Heart left ventricle (tissue), 16 donors: ENCODE measurements at regions of chr2 and their contacts with region 1.

Region 1: GRCh38 chr2:74690571-74690970 is 36.5 kb downstream of the SEMA4F start:
- DNase-seq: no peak
- ATAC-seq: peak in 3 of 4 donors; percentile 73 to 86 (median 80)
- H3K4me3 ChIP-seq: no peak overlapping the region
- H3K27ac ChIP-seq: no peak overlapping the region
- H3K4me1 ChIP-seq: peaks cover 0 to 11% (median 0%) of the 10 kb centered on the region in 12 donors
- H3K27me3 ChIP-seq: peaks cover 0 to 8% (median 0%) of the 10 kb centered on the region in 9 donors
- CTCF ChIP-seq: peak; percentile 46 to 80 (median 63)
- POLR2A ChIP-seq: no peak

Region 2: DNA sequence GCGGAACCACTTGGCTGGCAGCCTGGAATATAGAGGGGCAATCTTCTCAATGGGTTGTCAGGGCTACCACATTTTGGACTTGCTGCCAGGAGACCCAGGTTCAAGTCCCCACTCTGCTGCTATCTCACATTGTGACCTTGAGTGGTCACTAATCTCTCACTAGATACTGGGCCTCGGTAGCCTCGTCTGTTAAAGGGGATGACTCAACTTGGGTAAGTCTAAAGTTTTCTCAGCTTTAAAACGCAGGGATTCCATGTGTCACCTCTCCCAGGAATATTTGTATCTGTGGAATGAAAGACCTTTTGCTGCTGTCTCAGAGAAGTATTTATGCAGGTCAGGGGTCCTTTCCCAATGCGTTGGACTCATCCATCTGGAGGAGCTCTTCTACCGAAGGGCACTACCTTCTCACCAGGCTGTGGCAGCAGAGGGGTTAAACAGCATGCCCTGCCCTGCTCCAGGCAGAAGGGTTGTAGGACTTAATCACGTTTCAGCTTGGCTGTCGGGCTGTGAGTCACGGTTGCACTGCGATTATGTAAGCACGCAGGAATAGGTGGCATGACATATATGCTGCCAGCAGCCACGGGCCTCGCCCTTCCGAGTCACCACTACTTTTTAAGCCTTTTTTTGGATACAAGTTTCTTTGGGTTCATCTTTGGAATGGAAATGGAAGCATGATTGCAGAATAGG is 50.0 kb after region 1 on chr2:
- intact Hi-C with region 1: no loop called
- DNase-seq: peak in 4 of 5 donors; percentile 24 to 68 (median 40)
- ATAC-seq: peak in 3 of 4 donors; percentile 86 to 97 (median 91)
- H3K4me3 ChIP-seq: no peak overlapping the region
- H3K27ac ChIP-seq: peak overlapping the region in 1 of 12 donors; percentile 3
- H3K4me1 ChIP-seq: peaks cover 0 to 11% (median 2%) of the 10 kb centered on the region in 12 donors
- H3K27me3 ChIP-seq: no peaks in the 10 kb centered on the region
- CTCF ChIP-seq: no peak
- POLR2A ChIP-seq: no peak

Region 3: DNA sequence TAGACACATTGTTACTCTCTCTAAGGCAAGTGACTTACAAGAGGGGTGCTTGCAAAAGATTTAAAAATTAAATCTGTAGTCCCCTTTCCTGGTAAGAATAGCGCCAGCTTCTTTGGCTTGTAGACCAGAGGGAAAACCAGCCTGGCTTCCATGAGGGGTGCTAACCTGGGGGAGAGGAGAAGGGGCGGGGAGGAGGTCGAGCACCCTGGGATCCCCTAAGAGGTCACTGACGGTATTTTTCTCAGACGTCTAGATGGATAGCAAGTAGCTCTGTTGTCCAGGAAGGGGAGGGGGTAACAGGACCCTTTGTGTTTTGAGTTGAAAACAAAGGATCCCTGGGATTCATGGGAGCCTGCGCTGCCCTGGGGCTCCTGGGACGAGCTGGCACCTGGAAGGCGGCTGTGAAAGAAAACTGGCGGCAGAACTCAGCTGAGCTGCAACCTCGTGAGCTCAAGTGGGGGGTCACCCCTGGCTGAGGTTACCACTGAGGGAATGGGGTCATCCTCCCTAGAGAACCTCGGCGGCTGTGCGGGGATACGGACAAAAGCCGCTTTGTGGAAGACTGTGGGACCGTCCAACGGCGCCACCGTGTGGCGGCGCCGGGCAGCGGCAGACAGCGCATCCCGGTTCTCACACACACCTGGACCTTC is 918.2 kb after region 1 on chr2:
- intact Hi-C with region 1: loop called in 4 of 10 experiments (anchors 5 to 10 kb)
- DNase-seq: peak; percentile 37 to 69 (median 49)
- ATAC-seq: peak; percentile 74 to 91 (median 79)
- H3K4me3 ChIP-seq: peak overlapping the region in 7 of 12 donors; percentile 3 to 32 (median 19)
- H3K27ac ChIP-seq: no peak overlapping the region
- H3K4me1 ChIP-seq: peaks cover 0 to 5% (median 2%) of the 10 kb centered on the region in 12 donors
- H3K27me3 ChIP-seq: peaks cover 0 to 42% (median 18%) of the 10 kb centered on the region in 9 donors
- CTCF ChIP-seq: peak; percentile 83 to 97 (median 91)
- POLR2A ChIP-seq: no peak